ENCODE measurements at regions of chr14 and their contacts with region 1.

Region 1: DNA sequence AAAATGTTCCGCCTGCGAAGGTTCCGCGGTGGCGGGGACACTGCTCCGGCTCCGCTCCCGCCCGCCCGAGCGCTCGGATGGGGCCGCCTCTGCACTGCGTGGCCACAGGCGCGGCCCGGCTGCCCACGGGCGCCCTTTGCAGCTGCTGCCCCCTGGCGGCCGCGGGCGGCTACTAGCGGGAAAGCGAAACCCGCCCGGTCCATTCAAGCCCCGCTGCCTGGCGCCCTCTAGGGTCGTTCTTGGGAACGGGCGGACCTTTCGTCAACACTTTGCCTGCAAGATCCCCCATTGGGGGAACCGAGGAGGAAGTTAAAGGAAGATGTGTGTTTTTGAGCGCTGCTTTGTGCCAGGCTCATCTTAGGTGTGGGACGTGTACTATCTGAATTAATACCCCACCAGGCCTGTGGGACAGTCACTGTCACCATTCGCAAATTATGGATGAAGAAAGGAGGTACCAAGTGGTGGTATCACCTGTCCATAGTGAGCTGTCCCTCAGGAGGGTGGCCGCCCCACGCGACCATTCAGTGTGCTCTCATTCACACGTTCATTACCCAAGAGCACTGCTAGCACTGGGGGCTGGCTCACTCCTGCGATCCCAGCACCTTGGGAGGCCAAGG is 19.4 kb downstream of the GPR132 start:
- DNase-seq: peak; percentile 94
- H3K4me3 Mint-ChIP-seq: no peak overlapping the region
- H3K27ac Mint-ChIP-seq: no peak overlapping the region
- H3K4me1 Mint-ChIP-seq: peaks cover 15% of the 10 kb centered on the region
- H3K27me3 Mint-ChIP-seq: peaks cover 4% of the 10 kb centered on the region

Region 2: GRCh38 chr14:104826189-104826860 is 219.5 kb before region 1 on chr14:
- CTCF ChIA-PET with region 1: no interaction called
- POLR2A ChIA-PET with region 1: no interaction called
- DNase-seq: peak; percentile 93
- H3K4me3 Mint-ChIP-seq: peak overlapping the region; percentile 70
- H3K27ac Mint-ChIP-seq: no peak overlapping the region
- H3K4me1 Mint-ChIP-seq: peaks cover 23% of the 10 kb centered on the region
- H3K27me3 Mint-ChIP-seq: peaks cover 26% of the 10 kb centered on the region

Region 3: GRCh38 chr14:104913435-104913834 is 132.4 kb before region 1 on chr14:
- CTCF ChIA-PET with region 1: no interaction called
- POLR2A ChIA-PET with region 1: no interaction called
- DNase-seq: no peak
- H3K4me3 Mint-ChIP-seq: no peak overlapping the region
- H3K27ac Mint-ChIP-seq: no peak overlapping the region
- H3K4me1 Mint-ChIP-seq: no peaks in the 10 kb centered on the region
- H3K27me3 Mint-ChIP-seq: peaks cover 33% of the 10 kb centered on the region

Region 4: GRCh38 chr14:104976198-104977007 is 69.4 kb before region 1 on chr14:
- CTCF ChIA-PET with region 1: interaction called, 94 read pairs
- POLR2A ChIA-PET with region 1: no interaction called
- DNase-seq: peak; percentile 85
- H3K4me3 Mint-ChIP-seq: no peak overlapping the region
- H3K27ac Mint-ChIP-seq: peak overlapping the region; percentile 57
- H3K4me1 Mint-ChIP-seq: peaks cover 16% of the 10 kb centered on the region
- H3K27me3 Mint-ChIP-seq: peaks cover 24% of the 10 kb centered on the region

Region 5: GRCh38 chr14:104998801-104999200 is 47.0 kb before region 1 on chr14:
- CTCF ChIA-PET with region 1: interaction called, 12 read pairs
- POLR2A ChIA-PET with region 1: no interaction called
- DNase-seq: no peak
- H3K4me3 Mint-ChIP-seq: no peak overlapping the region
- H3K27ac Mint-ChIP-seq: no peak overlapping the region
- H3K4me1 Mint-ChIP-seq: no peaks in the 10 kb centered on the region
- H3K27me3 Mint-ChIP-seq: no peaks in the 10 kb centered on the region

Region 6: GRCh38 chr14:105015242-105015641 is 30.6 kb before region 1 on chr14:
- CTCF ChIA-PET with region 1: interaction called, 26 read pairs
- POLR2A ChIA-PET with region 1: no interaction called
- DNase-seq: no peak
- H3K4me3 Mint-ChIP-seq: peak overlapping the region; percentile 4
- H3K27ac Mint-ChIP-seq: peak overlapping the region; percentile 74
- H3K4me1 Mint-ChIP-seq: peaks cover 66% of the 10 kb centered on the region
- H3K27me3 Mint-ChIP-seq: no peaks in the 10 kb centered on the region

Region 7: DNA sequence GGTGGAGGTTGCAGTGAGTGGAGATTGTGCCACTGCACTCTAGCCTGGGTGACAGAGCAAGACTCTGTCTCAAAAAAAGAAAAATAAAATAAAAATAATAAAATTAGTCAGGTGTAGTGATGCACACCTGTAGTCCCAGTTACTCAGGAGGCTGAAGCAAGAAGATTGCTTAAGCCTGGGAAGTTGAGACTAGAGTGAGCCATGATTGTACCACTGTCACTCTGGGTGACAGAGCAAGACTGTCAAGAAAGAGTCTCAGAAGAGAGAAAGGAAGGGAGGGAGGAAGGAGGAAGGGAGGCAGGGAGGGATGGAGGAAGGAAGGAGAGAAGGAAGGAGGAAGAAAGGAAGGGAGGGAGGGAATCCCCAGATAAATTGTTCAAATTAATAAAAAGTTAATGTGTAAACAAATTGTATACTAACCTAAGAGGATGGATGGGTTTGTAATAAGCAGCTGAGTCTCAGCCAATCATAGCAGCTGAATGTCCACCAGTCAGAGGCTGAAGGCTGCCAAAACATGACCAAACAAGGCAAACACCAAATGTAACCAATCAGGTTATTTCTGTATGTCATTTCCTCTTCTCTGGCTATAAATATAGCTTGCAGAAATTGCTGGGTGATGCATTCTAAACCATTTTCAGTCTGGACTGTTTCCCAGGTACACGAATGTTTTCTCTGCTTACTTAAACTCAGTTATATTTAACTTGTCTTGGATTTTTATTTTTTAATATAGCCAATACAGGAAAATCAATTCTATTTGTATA is 18.8 kb before region 1 on chr14:
- CTCF ChIA-PET with region 1: interaction called, 21 read pairs
- POLR2A ChIA-PET with region 1: no interaction called
- DNase-seq: no peak
- H3K4me3 Mint-ChIP-seq: no peak overlapping the region
- H3K27ac Mint-ChIP-seq: no peak overlapping the region
- H3K4me1 Mint-ChIP-seq: peaks cover 40% of the 10 kb centered on the region
- H3K27me3 Mint-ChIP-seq: no peaks in the 10 kb centered on the region

Region 8: GRCh38 chr14:105065280-105066228 is 19.7 kb after region 1 on chr14 and contains the start of gene GPR132:
- CTCF ChIA-PET with region 1: interaction called, 22 read pairs
- POLR2A ChIA-PET with region 1: no interaction called
- DNase-seq: peak; percentile 97
- H3K4me3 Mint-ChIP-seq: peak within 1 kb of the TSS; percentile 80
- H3K27ac Mint-ChIP-seq: peak within 1 kb of the TSS; percentile 94
- H3K4me1 Mint-ChIP-seq: peaks cover 73% of the 10 kb centered on the region
- H3K27me3 Mint-ChIP-seq: no peaks in the 10 kb centered on the region
- total RNA-seq, gene GPR132: 44.2 to 46.6 TPM

Region 9: GRCh38 chr14:105086833-105087307 is 41.1 kb after region 1 on chr14:
- CTCF ChIA-PET with region 1: interaction called, 14 read pairs
- POLR2A ChIA-PET with region 1: no interaction called
- DNase-seq: peak; percentile 84
- H3K4me3 Mint-ChIP-seq: peak overlapping the region; percentile 64
- H3K27ac Mint-ChIP-seq: no peak overlapping the region
- H3K4me1 Mint-ChIP-seq: peaks cover 18% of the 10 kb centered on the region
- H3K27me3 Mint-ChIP-seq: peaks cover 15% of the 10 kb centered on the region

Measured in activated CD4-positive, alpha-beta T cell treated with anti-CD3 and anti-CD28 coated beads, Interleukin-2, amount 10 ng/mL, durations not matched to agents 7 days and 5 days (primary cell).